ENCODE measurements at regions of chr9 and their contacts with region 1.

Region 1: DNA sequence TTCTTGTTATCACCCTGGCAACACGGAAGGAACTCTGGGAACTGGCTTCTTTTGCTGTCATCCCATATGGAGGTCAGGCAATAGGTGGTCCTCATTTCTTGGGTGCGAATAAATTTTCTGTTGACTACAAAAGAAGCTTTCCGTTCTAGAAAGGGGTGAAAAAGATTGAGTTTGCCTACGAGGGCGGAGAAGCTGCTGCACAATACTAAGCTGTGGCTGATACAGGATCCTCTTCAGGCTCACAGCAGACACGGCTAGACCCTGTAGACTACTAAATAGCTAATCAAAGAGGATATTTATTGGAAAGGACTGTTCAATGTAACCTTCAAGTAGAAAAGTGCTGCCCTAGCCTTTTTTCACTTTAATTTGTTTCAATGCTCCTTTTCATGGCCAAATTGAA is 58.1 kb downstream of the TJP2 start:
- DNase-seq: no peak
- ATAC-seq: peak in 3 of 8 donors; percentile 18 to 49 (median 32)
- H3K4me3 ChIP-seq: no peak overlapping the region
- H3K27ac ChIP-seq: peak overlapping the region in 3 of 10 donors; percentile 35 to 37 (median 37)
- H3K4me1 ChIP-seq: peaks cover 0 to 20% (median 0%) of the 10 kb centered on the region in 9 donors
- H3K27me3 ChIP-seq: no peaks in the 10 kb centered on the region
- CTCF ChIP-seq: no peak

Region 2: GRCh38 chr9:69385581-69386033 is 153.5 kb after region 1 on chr9:
- intact Hi-C with region 1: loop called in 4 of 10 experiments (anchors 10 kb)
- DNase-seq: no peak
- ATAC-seq: peak in 1 of 8 donors; percentile 27
- H3K4me3 ChIP-seq: no peak overlapping the region
- H3K27ac ChIP-seq: no peak overlapping the region
- H3K4me1 ChIP-seq: peaks cover 4 to 50% (median 12%) of the 10 kb centered on the region in 9 donors
- H3K27me3 ChIP-seq: no peaks in the 10 kb centered on the region
- CTCF ChIP-seq: no peak

Region 3: DNA sequence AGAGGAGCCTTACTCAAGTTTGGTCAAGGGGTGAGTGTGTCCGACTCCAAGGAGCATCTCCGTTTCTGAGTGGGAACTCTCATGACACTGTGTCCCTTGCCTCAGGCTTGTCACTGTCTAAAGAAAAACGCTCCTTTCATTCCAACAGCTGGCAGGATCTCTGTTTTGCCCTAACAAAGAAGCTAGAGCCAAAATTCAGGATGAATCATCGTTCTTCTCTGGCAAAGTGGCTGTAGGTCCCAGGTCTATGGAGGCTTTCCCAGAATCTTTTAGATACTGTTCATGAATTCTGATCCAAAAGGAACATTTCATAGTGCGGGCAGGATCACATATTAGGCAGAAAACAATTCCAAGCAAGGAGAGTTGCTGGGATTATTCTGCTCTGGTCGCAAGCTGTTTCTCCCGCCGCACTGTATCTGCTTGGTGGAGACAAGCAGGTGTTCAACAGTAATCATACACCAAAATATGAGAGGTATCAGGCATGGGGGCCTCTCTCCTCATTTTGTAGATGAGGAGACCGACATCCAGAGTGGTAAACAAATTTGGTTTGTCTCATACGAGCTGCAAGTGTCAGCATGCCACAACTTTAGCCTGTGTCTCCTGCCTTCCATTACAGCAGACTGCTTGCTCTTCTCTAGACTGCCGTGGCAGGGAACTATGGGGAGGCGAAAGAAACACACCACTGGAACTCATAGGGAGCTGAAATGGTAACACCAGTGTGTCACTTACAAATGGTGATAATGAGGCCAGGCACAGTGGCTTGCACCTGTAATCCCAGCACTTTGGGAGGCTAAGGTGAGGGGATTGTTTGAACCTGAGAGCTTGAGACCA is 165.5 kb after region 1 on chr9:
- intact Hi-C with region 1: loop called in 2 of 10 experiments (anchors 10 kb)
- DNase-seq: no peak
- ATAC-seq: peak; percentile 35 to 67 (median 44)
- H3K4me3 ChIP-seq: peak overlapping the region in 1 of 10 donors; percentile 14
- H3K27ac ChIP-seq: peak overlapping the region in 9 of 10 donors; percentile 58 to 83 (median 72)
- H3K4me1 ChIP-seq: peaks cover 0 to 28% (median 13%) of the 10 kb centered on the region in 9 donors
- H3K27me3 ChIP-seq: no peaks in the 10 kb centered on the region
- CTCF ChIP-seq: no peak